Body of pancreas (tissue), 4 donors: ENCODE measurements at regions of chr17 and their contacts with region 1.

Region 1: GRCh38 chr17:4789901-4790704 is 1.3 kb downstream of the GLTPD2 start:
- DNase-seq: peak; percentile 84 to 89 (median 86)
- ATAC-seq: peak; percentile 89
- H3K4me3 ChIP-seq: peak overlapping the region; percentile 31 to 59
- H3K27ac ChIP-seq: peak overlapping the region; percentile 91 to 100 (median 94)
- H3K4me1 ChIP-seq: peaks cover 49% of the 10 kb centered on the region
- H3K27me3 ChIP-seq: peaks cover 0 to 11% of the 10 kb centered on the region in 2 donors
- CTCF ChIP-seq: peak; percentile 64 to 97 (median 89)
- POLR2A ChIP-seq: peak; percentile 85 to 94 (median 91)

Region 2: DNA sequence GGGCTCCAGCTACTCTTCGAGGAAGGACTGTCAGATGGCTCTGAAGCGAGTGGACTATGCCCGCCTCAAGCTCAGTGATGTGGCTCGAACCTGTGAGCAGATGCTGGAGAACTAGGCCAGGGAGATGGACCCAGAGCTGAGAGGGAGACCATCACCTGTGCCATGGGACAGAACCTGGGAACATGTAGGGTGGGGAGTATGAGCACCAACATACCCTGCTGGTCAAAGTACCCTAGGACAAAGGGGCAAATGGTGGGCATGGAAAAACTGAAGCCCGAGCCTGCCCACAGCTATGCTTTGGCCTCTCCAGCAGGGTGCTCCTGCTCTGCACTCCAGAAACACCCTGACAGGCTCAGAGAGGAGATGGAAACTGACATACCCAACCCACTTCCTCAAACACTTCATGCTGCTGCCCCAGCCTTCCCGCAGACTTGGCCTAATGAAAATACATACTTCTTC is 57.0 kb before region 1 on chr17:
- intact Hi-C with region 1: loop called (anchors 5 kb)
- DNase-seq: peak in 1 of 4 donors; percentile 68
- ATAC-seq: no peak
- H3K4me3 ChIP-seq: no peak overlapping the region
- H3K27ac ChIP-seq: peak overlapping the region in 1 of 4 donors; percentile 67
- H3K4me1 ChIP-seq: peaks cover 29% of the 10 kb centered on the region
- H3K27me3 ChIP-seq: no peaks in the 10 kb centered on the region
- CTCF ChIP-seq: peak in 1 of 7 experiments; percentile 36
- POLR2A ChIP-seq: no peak

Region 3: DNA sequence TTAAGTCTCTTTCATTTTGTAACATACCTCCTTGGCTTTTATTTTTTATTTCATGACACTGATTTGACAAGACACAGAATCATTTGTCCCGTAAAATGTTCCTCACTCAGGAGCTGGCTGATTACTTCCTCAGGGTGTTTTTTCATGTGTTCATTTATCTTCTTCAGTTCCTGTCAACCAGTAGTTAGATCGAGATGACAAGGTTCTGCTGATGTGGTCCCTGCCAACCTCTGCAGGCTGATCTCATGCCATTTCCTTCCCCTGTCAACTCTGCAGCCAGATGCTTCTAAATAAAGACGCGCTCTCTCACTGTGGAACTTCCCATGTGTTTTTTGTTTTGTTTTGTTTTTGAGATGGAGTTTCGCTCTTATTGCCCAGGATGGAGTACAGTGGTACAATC is 42.3 kb before region 1 on chr17:
- intact Hi-C with region 1: no loop called
- DNase-seq: peak in 1 of 4 donors; percentile 57
- ATAC-seq: no peak
- H3K4me3 ChIP-seq: no peak overlapping the region
- H3K27ac ChIP-seq: peak overlapping the region in 1 of 4 donors; percentile 16
- H3K4me1 ChIP-seq: peaks cover 6% of the 10 kb centered on the region
- H3K27me3 ChIP-seq: peaks cover 0 to 23% of the 10 kb centered on the region in 2 donors
- CTCF ChIP-seq: no peak
- POLR2A ChIP-seq: no peak

Region 4: DNA sequence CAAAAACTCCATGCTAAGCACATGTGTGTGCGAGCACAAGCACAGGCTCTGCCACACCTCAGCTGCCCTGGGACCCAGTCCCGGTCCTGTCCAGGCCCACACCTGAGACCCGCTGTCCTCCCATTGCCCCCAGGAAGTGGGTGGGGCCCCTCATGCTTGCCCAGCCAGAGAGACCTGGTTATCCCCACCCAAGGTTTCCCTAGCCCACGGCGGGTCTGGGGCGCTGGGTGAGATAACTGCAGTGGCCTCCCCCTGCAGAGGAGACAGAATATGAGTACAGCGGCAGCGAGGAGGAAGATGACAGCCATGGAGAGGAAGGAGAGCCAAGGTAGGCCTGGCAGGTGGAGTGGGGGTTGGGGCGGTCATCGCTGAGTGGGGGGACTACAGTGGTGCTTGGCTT is 96.7 kb after region 1 on chr17:
- intact Hi-C with region 1: loop called (anchors 5 kb)
- DNase-seq: no peak
- ATAC-seq: no peak
- H3K4me3 ChIP-seq: no peak overlapping the region
- H3K27ac ChIP-seq: no peak overlapping the region
- H3K4me1 ChIP-seq: no peaks in the 10 kb centered on the region
- H3K27me3 ChIP-seq: no peaks in the 10 kb centered on the region
- CTCF ChIP-seq: no peak
- POLR2A ChIP-seq: no peak